ENCODE measurements at regions of chr3 and their contacts with region 1.

Region 1: DNA sequence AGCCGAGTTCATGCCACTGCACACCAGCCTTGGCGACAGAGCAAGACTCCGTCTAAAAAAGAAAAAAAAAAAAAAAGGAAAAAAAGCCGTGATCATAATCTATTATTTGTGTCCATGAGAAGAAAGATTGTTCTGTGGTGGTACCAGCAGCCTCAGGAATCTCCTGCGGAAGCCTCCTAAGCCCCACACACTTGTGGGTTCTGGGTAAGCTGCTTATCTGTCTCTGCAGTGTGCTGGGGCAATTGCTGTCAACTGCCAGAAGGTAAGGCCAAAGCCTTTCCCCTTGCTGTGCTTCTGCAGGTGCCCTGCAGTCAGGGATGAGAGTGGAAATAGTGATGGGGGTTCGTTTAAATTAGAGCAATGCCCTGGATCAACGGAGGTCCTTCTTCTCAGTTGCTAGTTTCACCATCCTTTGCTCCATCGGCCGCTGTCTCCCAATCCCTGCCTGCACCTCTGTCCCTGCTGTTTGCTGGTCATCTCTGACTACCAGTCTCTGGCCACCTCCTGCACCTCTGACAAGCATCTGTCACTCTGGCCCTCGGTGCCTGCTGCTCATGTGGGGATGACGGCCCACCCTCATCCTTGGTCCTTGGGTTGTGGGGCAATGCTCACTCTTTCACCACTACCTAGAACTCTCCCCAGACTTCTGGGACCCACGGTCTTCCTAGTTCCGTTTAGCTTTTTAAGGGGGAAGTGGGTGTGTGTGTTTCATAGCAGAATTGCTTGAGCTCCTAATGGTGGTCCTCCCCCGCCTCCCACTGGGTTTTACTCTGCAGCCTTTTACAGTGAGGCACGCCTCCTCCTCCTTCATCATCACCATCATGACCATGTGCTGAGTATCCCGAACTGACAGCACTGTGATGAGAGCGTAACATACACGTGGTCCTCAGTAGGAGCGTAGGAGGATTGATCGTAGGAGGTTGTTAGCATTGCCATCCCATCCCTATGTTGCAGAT is 25.5 kb downstream of the CHRD start:
- H3K4me3 Mint-ChIP-seq: no peak overlapping the region
- H3K27ac Mint-ChIP-seq: no peak overlapping the region
- H3K4me1 Mint-ChIP-seq: peaks cover 46% of the 10 kb centered on the region
- H3K27me3 Mint-ChIP-seq: peaks cover 39% of the 10 kb centered on the region

Region 2: GRCh38 chr3:184417619-184418327 is 12.4 kb after region 1 on chr3:
- intact Hi-C with region 1: no loop called
- H3K4me3 Mint-ChIP-seq: no peak overlapping the region
- H3K27ac Mint-ChIP-seq: no peak overlapping the region
- H3K4me1 Mint-ChIP-seq: no peaks in the 10 kb centered on the region
- H3K27me3 Mint-ChIP-seq: peaks cover 1% of the 10 kb centered on the region

Region 3: GRCh38 chr3:184503647-184504046 is 98.3 kb after region 1 on chr3:
- intact Hi-C with region 1: no loop called
- H3K4me3 Mint-ChIP-seq: no peak overlapping the region
- H3K27ac Mint-ChIP-seq: no peak overlapping the region
- H3K4me1 Mint-ChIP-seq: peaks cover 21% of the 10 kb centered on the region
- H3K27me3 Mint-ChIP-seq: peaks cover 22% of the 10 kb centered on the region

Region 4: GRCh38 chr3:184786280-184786941 is 381.1 kb after region 1 on chr3:
- intact Hi-C with region 1: loop called (anchors 10 kb)
- H3K4me3 Mint-ChIP-seq: no peak overlapping the region
- H3K27ac Mint-ChIP-seq: peak overlapping the region; percentile 53
- H3K4me1 Mint-ChIP-seq: peaks cover 43% of the 10 kb centered on the region
- H3K27me3 Mint-ChIP-seq: peaks cover 2% of the 10 kb centered on the region

Measured in dendritic cell treated with granulocyte-macrophage colony-stimulating factor and Interleukin-4, amounts not matched to agents 40 ng/mL and 50 ng/mL, for 4 days (primary cell).